ENCODE measurements at regions of chr21 and their contacts with region 1.

Region 1: GRCh38 chr21:40120940-40121575 is 253.8 kb downstream of the PCP4 start:
- DNase-seq: peak in 1 of 10 donors; percentile 24
- H3K4me3 ChIP-seq: no peak overlapping the region
- H3K27ac ChIP-seq: no peak overlapping the region
- H3K27me3 ChIP-seq: peaks cover 0 to 6% (median 0%) of the 10 kb centered on the region in 45 donors
- CTCF ChIP-seq: peak; percentile 72 to 97 (median 86)

Region 2: GRCh38 chr21:39788383-39788782 is 332.7 kb before region 1 on chr21:
- intact Hi-C with region 1: loop called in 1 of 2 experiments (anchors 5 kb)
- DNase-seq: peak; percentile 23 to 80 (median 66)
- H3K4me3 ChIP-seq: peak overlapping the region in 39 of 59 donors; percentile 7 to 51 (median 32)
- H3K27ac ChIP-seq: peak overlapping the region in 1 of 59 donors; percentile 11
- H3K27me3 ChIP-seq: no peaks in the 10 kb centered on the region
- CTCF ChIP-seq: peak; percentile 40 to 88 (median 73)

Region 3: DNA sequence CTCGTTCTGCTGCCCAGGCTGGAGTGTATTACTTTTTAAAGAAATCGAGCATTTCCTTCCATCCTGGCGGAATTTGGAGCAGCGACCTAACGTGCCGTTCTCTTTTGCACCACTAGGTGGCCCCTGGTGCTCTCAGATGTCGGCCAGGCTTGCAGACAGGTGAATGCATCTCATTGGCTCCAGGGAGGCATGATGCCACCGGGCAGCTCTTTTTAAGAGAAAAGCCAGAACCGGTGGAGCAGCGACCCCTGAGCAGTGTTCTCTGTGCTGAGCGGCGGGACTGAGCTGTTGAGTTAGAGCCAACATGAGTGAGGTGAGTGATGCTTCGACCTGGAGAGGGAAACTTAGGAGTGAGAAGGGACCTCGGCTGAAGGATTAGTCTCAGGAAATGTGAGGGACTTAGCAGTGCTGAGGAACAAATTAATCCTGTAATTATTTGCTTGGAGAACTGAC is 253.8 kb before region 1 on chr21 and contains the start of gene PCP4:
- intact Hi-C with region 1: loop called (anchors 2 to 10 kb)
- DNase-seq: peak; percentile 46 to 81 (median 72)
- H3K4me3 ChIP-seq: peak within 1 kb of the TSS in 46 of 59 donors; percentile 3 to 55 (median 34)
- H3K27ac ChIP-seq: no peak within 1 kb of the TSS
- H3K27me3 ChIP-seq: peaks cover 0 to 8% (median 0%) of the 10 kb centered on the region in 45 donors
- CTCF ChIP-seq: peak; percentile 67 to 92 (median 84)
- total RNA-seq, gene PCP4: 10.7 to 130 (median 57.3) TPM

Region 4: GRCh38 chr21:39874759-39875158 is 246.3 kb before region 1 on chr21:
- intact Hi-C with region 1: loop called in 1 of 2 experiments (anchors 10 kb)
- DNase-seq: no peak
- H3K4me3 ChIP-seq: no peak overlapping the region
- H3K27ac ChIP-seq: no peak overlapping the region
- H3K27me3 ChIP-seq: peaks cover 0 to 11% (median 0%) of the 10 kb centered on the region in 45 donors
- CTCF ChIP-seq: no peak

Region 5: GRCh38 chr21:39885119-39885848 is 235.8 kb before region 1 on chr21:
- intact Hi-C with region 1: no loop called
- DNase-seq: peak in 7 of 10 donors; percentile 10 to 67 (median 37)
- H3K4me3 ChIP-seq: no peak overlapping the region
- H3K27ac ChIP-seq: peak overlapping the region in 21 of 59 donors; percentile 5 to 68 (median 35)
- H3K27me3 ChIP-seq: peaks cover 0 to 4% (median 0%) of the 10 kb centered on the region in 45 donors
- CTCF ChIP-seq: no peak